Aorta (tissue), 5 donors: ENCODE measurements at regions of chr6 and their contacts with region 1.

Region 1: DNA sequence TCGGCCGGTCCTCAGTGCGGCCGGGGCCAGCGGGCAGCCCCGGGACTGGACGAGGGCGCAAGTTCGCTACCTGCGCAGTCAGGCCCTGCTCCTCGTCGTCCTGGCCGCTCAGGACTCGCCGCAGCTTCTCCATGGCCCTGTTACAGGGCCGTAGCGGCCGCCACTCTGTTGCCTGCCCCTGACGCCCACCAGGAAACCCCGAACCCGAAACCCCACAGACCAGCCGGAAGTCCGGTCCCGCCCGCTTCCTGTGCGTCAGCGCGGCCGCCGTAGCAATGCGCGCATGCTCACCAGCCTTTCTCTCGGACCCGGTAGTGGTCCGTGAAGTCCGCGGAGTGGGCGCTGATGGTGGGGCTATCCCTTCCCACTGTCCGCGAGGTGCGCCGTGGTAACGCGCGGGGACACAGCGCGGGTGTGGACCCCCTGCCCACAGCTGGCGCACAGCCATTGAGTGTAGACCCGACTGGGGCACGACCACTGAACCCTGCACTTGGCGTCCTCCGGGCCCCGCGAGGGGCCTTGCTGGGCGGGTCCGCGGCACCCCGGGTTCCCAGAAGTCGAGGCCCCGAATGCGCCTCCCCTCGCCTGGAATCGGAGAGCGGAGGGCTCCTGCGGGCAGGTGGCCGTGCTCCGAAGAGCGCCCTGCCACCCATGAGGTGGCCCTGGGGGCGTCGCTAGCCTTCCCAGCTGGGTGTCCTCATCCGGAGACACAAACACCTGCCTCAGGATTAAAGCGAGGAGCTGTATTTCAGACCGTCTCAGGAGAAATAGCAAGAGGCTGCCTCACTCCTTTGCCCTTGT is at the start of gene SFT2D1:
- DNase-seq: peak; percentile 95 to 97
- ATAC-seq: peak; percentile 97
- H3K4me3 ChIP-seq: peak within 1 kb of the TSS; percentile 82 to 91
- H3K27ac ChIP-seq: peak within 1 kb of the TSS in 1 of 2 donors; percentile 71
- H3K4me1 ChIP-seq: peaks cover 0 to 3% of the 10 kb centered on the region in 2 donors
- H3K27me3 ChIP-seq: no peaks in the 10 kb centered on the region
- total RNA-seq, gene SFT2D1: 36.5 to 37.1 TPM

Region 2: GRCh38 chr6:166382933-166383801 is 40.6 kb after region 1 on chr6 and contains the start of gene MPC1:
- intact Hi-C with region 1: loop called (anchors 2 to 5 kb)
- DNase-seq: peak; percentile 97 to 99
- ATAC-seq: peak; percentile 99
- H3K4me3 ChIP-seq: peak within 1 kb of the TSS; percentile 46 to 77
- H3K27ac ChIP-seq: peak within 1 kb of the TSS; percentile 5 to 83
- H3K4me1 ChIP-seq: no peaks in the 10 kb centered on the region
- H3K27me3 ChIP-seq: no peaks in the 10 kb centered on the region
- total RNA-seq, gene MPC1: 36.7 to 71.7 TPM

Region 3: DNA sequence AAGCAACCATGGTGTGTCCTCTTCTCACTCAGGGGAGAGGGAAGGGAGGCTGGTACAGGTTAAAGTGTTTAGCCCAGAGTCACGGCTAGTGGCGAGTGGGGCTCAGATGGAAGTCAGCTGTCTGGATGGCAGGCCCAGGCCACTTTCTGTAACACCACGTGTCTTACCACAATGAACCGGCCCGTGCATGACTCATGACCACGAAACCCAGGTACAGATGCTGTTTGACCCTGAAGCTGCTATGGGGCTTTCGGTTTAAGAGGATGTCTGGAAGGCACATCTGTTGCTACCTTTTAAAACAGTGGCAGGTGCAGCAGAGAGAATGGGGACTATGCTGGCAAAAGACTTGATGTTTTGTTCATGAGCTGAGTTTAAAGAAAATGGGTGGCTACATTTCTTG is 76.7 kb after region 1 on chr6:
- intact Hi-C with region 1: no loop called
- DNase-seq: no peak
- ATAC-seq: no peak
- H3K4me3 ChIP-seq: no peak overlapping the region
- H3K27ac ChIP-seq: no peak overlapping the region
- H3K4me1 ChIP-seq: no peaks in the 10 kb centered on the region
- H3K27me3 ChIP-seq: no peaks in the 10 kb centered on the region